Psoas muscle (tissue), 8 donors: ENCODE measurements at regions of chr13 and their contacts with region 1.

Region 1: DNA sequence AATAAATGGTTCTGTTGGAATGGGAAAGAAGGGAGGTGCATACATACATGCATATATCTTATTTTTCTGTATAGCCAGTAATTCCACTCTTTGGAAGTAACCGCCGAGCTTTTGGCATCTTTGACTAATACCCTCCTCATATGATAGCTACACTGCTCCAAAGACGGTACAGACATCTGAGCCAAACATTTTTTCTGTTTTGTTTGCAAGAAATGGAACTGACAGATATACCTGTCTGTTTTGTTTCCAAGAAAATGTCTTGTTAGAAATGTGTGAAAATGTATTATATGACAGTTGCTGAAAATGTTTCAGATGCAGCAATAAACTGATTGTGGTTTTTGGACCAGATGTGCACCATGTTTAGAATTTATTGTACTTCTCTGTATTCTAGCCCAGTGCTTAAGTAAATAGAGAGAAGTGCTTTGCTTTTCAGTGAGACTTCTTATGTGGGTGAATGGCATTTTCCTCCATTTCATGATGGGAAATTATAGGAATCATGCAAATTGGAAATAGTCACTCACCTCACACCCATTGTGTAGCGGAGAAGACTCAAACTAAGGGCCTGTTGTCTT is 396.9 kb downstream of the KCNRG start:
- DNase-seq: no peak
- ATAC-seq: no peak
- H3K4me3 ChIP-seq: no peak overlapping the region
- H3K27ac ChIP-seq: peak overlapping the region; percentile 54
- H3K4me1 ChIP-seq: peaks cover 10% of the 10 kb centered on the region
- H3K27me3 ChIP-seq: no peaks in the 10 kb centered on the region
- CTCF ChIP-seq: no peak

Region 2: GRCh38 chr13:50340551-50341287 is 71.4 kb before region 1 on chr13:
- intact Hi-C with region 1: loop called in 1 of 2 experiments (anchors 2 kb)
- DNase-seq: peak; percentile 35 to 65
- ATAC-seq: no peak
- H3K4me3 ChIP-seq: no peak overlapping the region
- H3K27ac ChIP-seq: no peak overlapping the region
- H3K4me1 ChIP-seq: no peaks in the 10 kb centered on the region
- H3K27me3 ChIP-seq: no peaks in the 10 kb centered on the region
- CTCF ChIP-seq: no peak